MCF 10A (cell line): ENCODE measurements at regions of chr7 and their contacts with region 1.

Region 1: DNA sequence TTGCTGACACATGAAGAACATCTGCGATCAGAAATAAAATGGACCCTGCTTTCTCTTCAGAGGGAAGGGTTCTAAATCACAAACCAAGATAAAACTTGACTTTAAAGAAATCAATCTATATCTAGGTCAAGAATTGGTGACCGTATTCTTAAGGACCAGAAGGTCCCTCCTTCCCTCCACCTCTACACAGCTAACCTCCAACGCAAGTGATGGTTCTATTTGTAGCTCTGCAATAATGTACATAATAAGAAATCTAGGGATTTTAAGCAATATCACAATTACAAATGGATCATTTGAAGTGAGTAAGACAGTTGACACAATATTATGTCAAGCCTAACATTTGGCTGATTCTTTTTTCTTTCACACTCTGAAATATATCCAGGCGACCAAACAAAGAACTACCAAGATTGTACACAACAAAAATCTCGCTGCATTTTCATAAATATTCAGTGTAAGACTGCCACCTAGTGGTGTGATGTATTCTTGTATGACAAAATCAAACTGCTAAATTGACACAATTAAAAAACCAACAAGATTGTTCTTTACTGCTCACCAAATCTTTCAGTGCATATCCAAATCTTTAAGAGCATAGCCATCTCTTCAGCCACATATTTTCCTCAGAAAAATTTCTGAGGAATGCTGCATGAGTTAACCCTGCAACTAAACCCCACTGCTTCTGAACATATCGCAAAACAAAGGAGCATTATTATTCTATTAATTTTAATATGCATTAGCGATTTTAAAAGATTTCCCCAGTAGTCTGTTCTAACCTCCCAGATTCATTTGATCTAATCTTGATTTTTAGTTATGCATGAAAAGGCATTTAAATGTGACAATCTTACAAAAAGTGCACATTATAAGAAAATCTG is 44.5 kb downstream of the ICA1 start:
- DNase-seq: peak; percentile 64
- H3K4me3 Mint-ChIP-seq: no peak overlapping the region
- H3K27ac Mint-ChIP-seq: no peak overlapping the region
- H3K4me1 Mint-ChIP-seq: peaks cover 5% of the 10 kb centered on the region
- H3K27me3 Mint-ChIP-seq: no peaks in the 10 kb centered on the region
- CTCF ChIP-seq: peak; percentile 65

Region 2: DNA sequence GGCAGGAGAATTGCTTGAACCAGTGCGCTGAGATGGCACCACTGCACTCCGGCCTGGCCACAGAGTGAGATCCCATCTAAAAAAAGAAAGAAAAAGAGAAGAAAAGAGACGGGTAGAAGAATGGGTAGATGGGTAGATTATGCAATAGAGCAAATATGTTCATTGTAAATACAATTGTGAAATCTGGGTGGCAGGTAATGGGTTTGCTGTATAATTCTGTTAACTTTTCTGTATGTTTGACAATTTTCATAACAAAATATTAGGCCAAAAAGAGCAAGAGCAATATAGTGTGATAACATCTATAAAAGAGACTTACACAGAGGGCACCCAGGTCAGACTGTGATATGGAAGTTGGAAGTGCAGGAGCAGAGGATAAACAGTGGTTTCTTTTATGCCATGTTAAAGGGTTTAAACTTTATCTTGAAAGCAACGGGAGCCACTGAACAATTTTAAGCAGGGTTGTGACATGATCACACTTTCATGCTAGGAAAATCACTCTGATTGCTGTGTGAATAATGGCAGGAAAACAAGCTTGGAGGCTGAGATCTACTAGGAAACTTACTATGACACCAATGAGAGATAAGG is 675.1 kb before region 1 on chr7:
- CTCF ChIA-PET with region 1: no interaction called
- POLR2A ChIA-PET with region 1: no interaction called
- intact Hi-C with region 1: loop called (anchors 5 kb)
- DNase-seq: no peak
- H3K4me3 Mint-ChIP-seq: no peak overlapping the region
- H3K27ac Mint-ChIP-seq: peak overlapping the region; percentile 62
- H3K4me1 Mint-ChIP-seq: peaks cover 18% of the 10 kb centered on the region
- H3K27me3 Mint-ChIP-seq: no peaks in the 10 kb centered on the region
- CTCF ChIP-seq: no peak

Region 3: GRCh38 chr7:7595451-7595850 is 622.0 kb before region 1 on chr7:
- CTCF ChIA-PET with region 1: interaction called, 4 read pairs
- POLR2A ChIA-PET with region 1: no interaction called
- intact Hi-C with region 1: loop called (anchors 1 kb)
- DNase-seq: peak; percentile 26
- H3K4me3 Mint-ChIP-seq: no peak overlapping the region
- H3K27ac Mint-ChIP-seq: no peak overlapping the region
- H3K4me1 Mint-ChIP-seq: peaks cover 5% of the 10 kb centered on the region
- H3K27me3 Mint-ChIP-seq: no peaks in the 10 kb centered on the region
- CTCF ChIP-seq: peak; percentile 28

Region 4: DNA sequence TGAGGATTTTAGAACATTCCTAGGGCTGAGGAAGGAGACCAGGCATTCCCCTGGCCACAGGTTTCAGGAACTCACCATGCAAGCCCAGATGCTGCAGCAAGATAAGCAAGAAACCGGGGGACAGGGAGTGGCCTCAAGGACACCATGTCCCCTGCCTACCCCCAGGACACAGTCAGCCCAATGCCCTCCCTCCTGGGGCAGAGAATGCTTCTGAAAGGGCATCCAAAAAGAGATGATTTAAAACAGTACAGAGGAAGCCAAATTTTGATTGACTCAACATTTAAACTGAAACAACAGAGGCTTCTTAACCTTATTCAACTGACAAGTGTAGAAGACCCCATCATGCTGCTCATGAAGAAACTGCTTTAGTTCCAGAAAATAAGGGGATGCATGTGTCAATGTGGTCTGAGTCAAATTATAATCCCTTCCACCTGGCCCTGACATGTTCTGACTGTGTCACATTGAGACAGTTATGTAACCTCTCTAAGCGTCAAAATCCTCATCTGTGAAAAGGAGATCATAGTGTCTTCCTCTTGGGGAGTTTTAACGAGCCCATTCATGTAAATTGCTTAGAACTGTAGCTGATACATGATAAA is 15.5 kb before region 1 on chr7:
- CTCF ChIA-PET with region 1: interaction called, 8 read pairs
- POLR2A ChIA-PET with region 1: interaction called, 11 read pairs
- intact Hi-C with region 1: no loop called
- DNase-seq: peak; percentile 27
- H3K4me3 Mint-ChIP-seq: no peak overlapping the region
- H3K27ac Mint-ChIP-seq: peak overlapping the region; percentile 51
- H3K4me1 Mint-ChIP-seq: peaks cover 15% of the 10 kb centered on the region
- H3K27me3 Mint-ChIP-seq: no peaks in the 10 kb centered on the region
- CTCF ChIP-seq: no peak

Region 5: GRCh38 chr7:8436965-8437364 is 219.5 kb after region 1 on chr7:
- CTCF ChIA-PET with region 1: no interaction called
- POLR2A ChIA-PET with region 1: no interaction called
- intact Hi-C with region 1: no loop called
- DNase-seq: peak; percentile 65
- H3K4me3 Mint-ChIP-seq: no peak overlapping the region
- H3K27ac Mint-ChIP-seq: no peak overlapping the region
- H3K4me1 Mint-ChIP-seq: peaks cover 5% of the 10 kb centered on the region
- H3K27me3 Mint-ChIP-seq: peaks cover 69% of the 10 kb centered on the region
- CTCF ChIP-seq: peak; percentile 67